Activated T-helper 2 cell treated with anti-CD3 and anti-CD28 coated beads, Interferon-gamma antibody, Interleukin-2, Interleukin-4, amounts not matched to agents 10 μg/mL and 5 μg/mL and 100 μg/mL, durations not matched to agents 14 hours and 24 hours and 36 hours (primary cell): ENCODE measurements at regions of chr1 and their contacts with region 1.

Region 1: DNA sequence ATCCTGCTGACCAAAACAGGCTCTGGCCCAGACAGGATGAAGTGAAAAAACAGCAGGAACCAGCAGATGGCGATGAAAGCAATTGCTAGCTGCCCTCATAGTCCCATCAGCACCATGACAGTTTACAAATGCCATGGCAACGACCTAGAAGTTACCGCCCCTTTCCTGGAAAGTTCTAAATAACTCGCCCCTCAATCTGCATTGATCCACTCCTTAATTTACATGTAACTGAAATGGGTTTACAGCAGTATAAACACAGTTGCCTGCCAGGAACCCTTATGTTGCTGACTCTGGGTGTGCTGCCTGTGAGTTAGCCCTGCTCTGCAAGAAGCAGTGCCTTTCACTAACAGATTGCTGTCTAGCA is 65.5 kb upstream of the CR1L start:
- DNase-seq: peak; percentile 23
- H3K4me3 Mint-ChIP-seq: no peak overlapping the region
- H3K27ac Mint-ChIP-seq: no peak overlapping the region
- H3K4me1 Mint-ChIP-seq: peaks cover 7% of the 10 kb centered on the region
- H3K27me3 Mint-ChIP-seq: peaks cover 30% of the 10 kb centered on the region

Region 2: GRCh38 chr1:207463021-207463420 is 116.4 kb before region 1 on chr1:
- intact Hi-C with region 1: no loop called
- DNase-seq: no peak
- H3K4me3 Mint-ChIP-seq: no peak overlapping the region
- H3K27ac Mint-ChIP-seq: no peak overlapping the region
- H3K4me1 Mint-ChIP-seq: peaks cover 23% of the 10 kb centered on the region
- H3K27me3 Mint-ChIP-seq: peaks cover 17% of the 10 kb centered on the region

Region 3: GRCh38 chr1:207619871-207620542 is 40.6 kb after region 1 on chr1:
- intact Hi-C with region 1: loop called (anchors 1 kb)
- DNase-seq: no peak
- H3K4me3 Mint-ChIP-seq: no peak overlapping the region
- H3K27ac Mint-ChIP-seq: no peak overlapping the region
- H3K4me1 Mint-ChIP-seq: no peaks in the 10 kb centered on the region
- H3K27me3 Mint-ChIP-seq: peaks cover 16% of the 10 kb centered on the region